Endothelial cell of umbilical vein (primary cell): ENCODE measurements at regions of chr10 and their contacts with region 1.

Region 1: GRCh38 chr10:78302989-78303854 is 269.6 kb downstream of the RPS24 start:
- DNase-seq: peak; percentile 97
- H3K4me3 ChIP-seq: peak overlapping the region; percentile 31 to 59 (median 44)
- H3K27ac ChIP-seq: peak overlapping the region; percentile 76
- H3K4me1 ChIP-seq: peaks cover 7% of the 10 kb centered on the region
- H3K27me3 ChIP-seq: peaks cover 8 to 11% of the 10 kb centered on the region in 2 experiments
- CTCF ChIP-seq: peak; percentile 69 to 87
- POLR2A ChIP-seq: peak; percentile 67

Region 2: GRCh38 chr10:78255796-78256638 is 47.2 kb before region 1 on chr10:
- CTCF ChIA-PET with region 1: no interaction called
- POLR2A ChIA-PET with region 1: no interaction called
- dilution Hi-C with region 1: no loop called
- intact Hi-C with region 1: loop called (anchors 1 kb)
- DNase-seq: peak; percentile 92
- H3K4me3 ChIP-seq: no peak overlapping the region
- H3K27ac ChIP-seq: peak overlapping the region; percentile 90
- H3K4me1 ChIP-seq: peaks cover 16% of the 10 kb centered on the region
- H3K27me3 ChIP-seq: no peaks in the 10 kb centered on the region
- CTCF ChIP-seq: no peak
- POLR2A ChIP-seq: no peak

Region 3: GRCh38 chr10:78381107-78381506 is 77.9 kb after region 1 on chr10:
- CTCF ChIA-PET with region 1: no interaction called
- POLR2A ChIA-PET with region 1: no interaction called
- dilution Hi-C with region 1: no loop called
- intact Hi-C with region 1: loop called (anchors 2 kb)
- DNase-seq: no peak
- H3K4me3 ChIP-seq: no peak overlapping the region
- H3K27ac ChIP-seq: no peak overlapping the region
- H3K4me1 ChIP-seq: no peaks in the 10 kb centered on the region
- H3K27me3 ChIP-seq: peaks cover 2 to 11% of the 10 kb centered on the region in 2 experiments
- CTCF ChIP-seq: peak; percentile 40 to 57
- POLR2A ChIP-seq: no peak

Region 4: DNA sequence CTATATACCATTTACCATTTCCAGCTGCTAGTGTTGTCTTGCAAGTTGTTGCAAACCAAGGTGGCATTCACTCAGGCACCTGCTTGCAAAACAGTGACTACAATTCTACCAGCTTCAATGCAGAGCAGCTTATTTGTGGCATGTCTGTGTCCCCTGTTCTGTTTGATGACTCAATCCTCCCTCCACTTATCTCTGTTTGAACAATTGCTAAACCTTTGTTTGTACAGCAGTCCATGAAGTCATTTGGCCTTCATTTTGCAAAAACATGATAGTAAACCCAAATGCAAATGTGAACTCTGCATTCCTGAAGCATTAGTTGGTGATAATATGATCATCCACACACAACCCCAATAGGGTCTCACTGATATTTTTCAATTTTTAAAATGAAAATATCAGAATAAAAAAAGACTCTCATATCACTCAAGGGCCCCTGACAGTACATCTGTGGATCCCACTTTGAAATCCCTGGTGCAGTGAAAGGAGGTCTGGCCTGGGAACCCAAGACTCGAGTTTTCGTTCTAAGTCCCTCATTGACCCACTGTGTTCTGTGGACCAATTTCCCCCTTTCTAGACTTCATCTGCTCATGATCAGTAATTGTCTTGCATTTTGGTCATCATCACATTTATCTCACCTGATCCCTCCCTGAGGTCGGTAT is 155.9 kb after region 1 on chr10:
- CTCF ChIA-PET with region 1: interaction called, 7 read pairs
- POLR2A ChIA-PET with region 1: no interaction called
- dilution Hi-C with region 1: no loop called
- intact Hi-C with region 1: loop called (anchors 1 kb)
- DNase-seq: peak; percentile 98
- H3K4me3 ChIP-seq: no peak overlapping the region
- H3K27ac ChIP-seq: peak overlapping the region; percentile 99
- H3K4me1 ChIP-seq: peaks cover 43% of the 10 kb centered on the region
- H3K27me3 ChIP-seq: no peaks in the 10 kb centered on the region
- CTCF ChIP-seq: no peak
- POLR2A ChIP-seq: peak; percentile 87

Region 5: GRCh38 chr10:78657163-78657861 is 354.1 kb after region 1 on chr10:
- CTCF ChIA-PET with region 1: no interaction called
- POLR2A ChIA-PET with region 1: no interaction called
- dilution Hi-C with region 1: no loop called
- intact Hi-C with region 1: loop called (anchors 1 kb)
- DNase-seq: peak; percentile 50
- H3K4me3 ChIP-seq: no peak overlapping the region
- H3K27ac ChIP-seq: no peak overlapping the region
- H3K4me1 ChIP-seq: peaks cover 4% of the 10 kb centered on the region
- H3K27me3 ChIP-seq: peaks cover 17% of the 10 kb centered on the region in 2 experiments
- CTCF ChIP-seq: peak; percentile 61 to 92
- POLR2A ChIP-seq: no peak